ENCODE measurements at regions of chr7 and their contacts with region 1.

Region 1: GRCh38 chr7:24979863-24980533 is at the start of gene OSBPL3:
- DNase-seq: peak; percentile 90 to 98 (median 97)

Region 2: GRCh38 chr7:24819916-24820689 is 159.9 kb before region 1 on chr7:
- intact Hi-C with region 1: loop called (anchors 5 kb)
- DNase-seq: peak; percentile 50 to 94 (median 80)

Region 3: DNA sequence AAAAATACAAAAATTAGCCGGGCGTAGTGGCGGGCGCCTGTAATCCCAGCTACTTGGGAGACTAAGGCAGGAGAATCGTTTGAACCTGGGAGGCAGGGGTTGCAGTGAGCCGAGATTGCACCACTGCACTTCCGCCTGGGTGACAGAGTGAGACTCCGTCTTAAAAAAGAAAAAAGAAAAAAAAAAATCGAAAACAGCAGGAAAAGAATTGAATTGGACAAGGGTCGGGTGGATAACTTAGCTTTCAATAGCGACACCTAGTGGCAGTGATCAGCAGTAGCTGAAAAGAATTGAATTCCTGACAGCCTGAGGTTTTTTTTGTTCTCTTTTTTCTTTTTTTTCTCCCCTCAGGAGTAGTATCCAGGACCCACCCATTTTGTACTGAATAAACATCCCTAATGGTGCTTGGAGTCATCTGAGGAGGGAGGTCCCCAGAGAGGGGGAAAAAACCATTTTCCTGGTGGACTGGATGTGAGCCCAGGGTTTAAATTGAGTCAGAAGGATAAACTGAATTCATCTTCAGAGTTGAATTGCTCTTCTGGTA is 90.0 kb after region 1 on chr7:
- intact Hi-C with region 1: loop called (anchors 10 kb)
- DNase-seq: peak in 34 of 42 donors; percentile 12 to 84 (median 53)